K562 (cell line): ENCODE measurements at regions of chr19 and their contacts with region 1.

Region 1: GRCh38 chr19:50705422-50706019 is 14.1 kb downstream of the SHANK1 start:
- DNase-seq: peak; percentile 81 to 84 (median 82)
- ATAC-seq: peak; percentile 92
- H3K4me3 ChIP-seq: no peak overlapping the region
- H3K27ac ChIP-seq: no peak overlapping the region
- H3K4me1 ChIP-seq: peaks cover 0 to 19% of the 10 kb centered on the region in 2 experiments; a peak in 2 of 5 replicates
- H3K27me3 ChIP-seq: peaks cover 20 to 37% of the 10 kb centered on the region in 2 experiments; a peak in 4 of 5 replicates
- CTCF ChIP-seq: peak; percentile 85 to 93 (median 88)
- EP300 ChIP-seq: no peak
- POLR2A ChIP-seq: no peak
- RAD21 ChIP-seq: peak; percentile 85 to 93

Region 2: DNA sequence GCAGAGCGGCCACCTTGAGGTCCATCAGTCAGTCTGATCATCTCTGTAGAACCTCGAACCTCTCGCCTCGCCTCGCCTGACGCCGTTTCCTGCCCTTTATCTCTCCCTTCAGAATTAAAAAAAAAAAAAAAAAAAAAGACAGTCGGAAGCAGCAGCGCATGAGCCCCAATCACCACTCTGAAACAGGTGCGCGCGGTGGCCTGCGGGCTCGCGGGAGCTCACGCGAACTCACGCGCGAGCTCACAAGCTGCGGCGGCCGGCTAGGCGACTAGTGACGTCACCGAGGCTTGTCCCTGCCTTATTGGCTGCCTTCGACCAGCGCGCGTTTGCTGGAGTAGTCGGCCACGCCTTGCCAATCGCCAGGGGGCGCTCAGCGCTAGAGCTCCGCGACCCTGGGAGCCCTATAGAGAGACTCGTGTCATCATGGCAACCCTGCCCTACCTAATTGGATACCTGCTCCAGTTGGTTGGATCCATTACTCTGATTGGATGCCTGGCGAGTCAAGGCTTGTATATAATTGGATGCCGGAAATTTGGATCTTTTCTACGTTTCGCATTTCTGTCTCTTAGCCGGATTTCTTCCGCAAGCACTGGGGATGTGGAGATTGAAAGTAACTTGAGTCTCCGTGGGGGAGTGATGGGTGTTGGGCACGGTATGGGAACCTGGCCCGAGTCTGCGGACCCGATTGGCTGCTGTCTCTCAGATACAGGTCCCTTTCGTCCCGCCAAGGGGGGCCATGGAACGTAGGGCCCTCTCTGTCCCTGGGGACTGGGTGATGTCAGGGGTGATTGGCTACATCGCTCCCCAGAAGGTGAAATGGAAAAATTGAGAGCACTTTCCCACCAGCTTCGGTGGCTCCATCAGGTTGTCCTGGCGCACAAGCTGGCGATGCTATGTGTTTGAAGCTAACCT is 97.4 kb before region 1 on chr19:
- CTCF ChIA-PET with region 1: no interaction called
- POLR2A ChIA-PET with region 1: no interaction called
- in situ Hi-C with region 1: no loop called
- intact Hi-C with region 1: loop called (anchors 5 kb)
- DNase-seq: peak; percentile 91 to 99 (median 93)
- ATAC-seq: peak; percentile 93
- H3K4me3 ChIP-seq: no peak overlapping the region
- H3K27ac ChIP-seq: no peak overlapping the region
- H3K4me1 ChIP-seq: peaks cover 2 to 21% of the 10 kb centered on the region in 2 experiments
- H3K27me3 ChIP-seq: no peaks in the 10 kb centered on the region
- CTCF ChIP-seq: peak; percentile 92 to 98 (median 94)
- EP300 ChIP-seq: no peak
- POLR2A ChIP-seq: no peak; the same call in 1 of the 2 replicates
- RAD21 ChIP-seq: peak; percentile 90 to 92

Region 3: GRCh38 chr19:50690439-50690838 is 15.1 kb before region 1 on chr19:
- CTCF ChIA-PET with region 1: no interaction called
- POLR2A ChIA-PET with region 1: no interaction called
- in situ Hi-C with region 1: no loop called
- intact Hi-C with region 1: no loop called
- DNase-seq: no peak
- ATAC-seq: no peak
- H3K4me3 ChIP-seq: no peak overlapping the region
- H3K27ac ChIP-seq: no peak overlapping the region
- H3K4me1 ChIP-seq: peaks cover 0 to 29% of the 10 kb centered on the region in 2 experiments; a peak in 2 of 5 replicates
- H3K27me3 ChIP-seq: peaks cover 13 to 44% of the 10 kb centered on the region in 2 experiments; a peak in 4 of 5 replicates
- CTCF ChIP-seq: no peak
- EP300 ChIP-seq: no peak
- POLR2A ChIP-seq: no peak
- RAD21 ChIP-seq: no peak

Region 4: GRCh38 chr19:50785329-50785728 is 79.8 kb after region 1 on chr19:
- CTCF ChIA-PET with region 1: interaction called, 61 read pairs
- POLR2A ChIA-PET with region 1: interaction called, 4 read pairs
- in situ Hi-C with region 1: loop called (anchors 5 kb)
- intact Hi-C with region 1: loop called (anchors 1 kb)
- DNase-seq: no peak
- ATAC-seq: no peak
- H3K4me3 ChIP-seq: no peak overlapping the region
- H3K27ac ChIP-seq: no peak overlapping the region
- H3K4me1 ChIP-seq: peaks cover 7 to 15% of the 10 kb centered on the region in 2 experiments; a peak in 4 of 5 replicates
- H3K27me3 ChIP-seq: no peaks in the 10 kb centered on the region
- CTCF ChIP-seq: no peak
- EP300 ChIP-seq: no peak
- POLR2A ChIP-seq: no peak
- RAD21 ChIP-seq: no peak

Region 5: GRCh38 chr19:50915943-50916468 is 210.5 kb after region 1 on chr19:
- CTCF ChIA-PET with region 1: interaction called, 5 read pairs
- POLR2A ChIA-PET with region 1: no interaction called
- in situ Hi-C with region 1: loop called (anchors 5 kb)
- intact Hi-C with region 1: no loop called
- DNase-seq: no peak
- ATAC-seq: no peak
- H3K4me3 ChIP-seq: no peak overlapping the region
- H3K27ac ChIP-seq: no peak overlapping the region
- H3K4me1 ChIP-seq: peaks cover 0 to 7% of the 10 kb centered on the region in 2 experiments; a peak in 2 of 5 replicates
- H3K27me3 ChIP-seq: peaks cover 26 to 53% of the 10 kb centered on the region in 2 experiments
- CTCF ChIP-seq: no peak
- EP300 ChIP-seq: no peak
- POLR2A ChIP-seq: no peak
- RAD21 ChIP-seq: no peak

Region 6: DNA sequence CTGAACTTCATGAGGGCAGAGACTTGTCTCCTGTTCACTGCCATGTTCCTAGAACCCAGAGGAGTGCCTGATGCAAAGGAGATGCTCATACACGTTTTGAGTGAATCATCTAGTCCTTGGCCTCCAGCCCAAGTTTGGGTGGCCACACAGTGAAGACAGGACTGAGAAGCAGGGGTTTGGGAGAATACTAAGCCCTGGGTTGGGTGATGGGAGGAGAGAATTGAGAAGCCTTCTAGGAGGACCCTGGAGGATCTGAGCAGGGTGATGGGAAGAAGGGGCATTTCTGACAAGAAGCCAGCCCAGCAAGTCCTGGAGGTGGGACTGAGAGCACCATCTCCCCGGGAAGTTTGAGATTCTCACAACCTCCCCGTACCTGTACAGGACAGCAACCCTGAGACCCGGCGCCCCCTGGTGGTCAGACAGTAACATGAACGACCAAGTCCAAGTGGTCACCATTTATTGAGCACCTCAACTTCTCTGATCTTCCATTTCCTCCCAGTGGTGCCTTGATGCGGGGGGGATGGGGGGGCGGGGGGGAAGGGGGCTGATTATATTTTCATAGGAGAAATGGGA is 391.7 kb after region 1 on chr19:
- CTCF ChIA-PET with region 1: interaction called, 4 read pairs
- POLR2A ChIA-PET with region 1: no interaction called
- in situ Hi-C with region 1: loop called (anchors 10 kb)
- intact Hi-C with region 1: loop called (anchors 5 kb)
- DNase-seq: peak; percentile 74 to 76 (median 76)
- ATAC-seq: peak; percentile 95
- H3K4me3 ChIP-seq: no peak overlapping the region
- H3K27ac ChIP-seq: no peak overlapping the region
- H3K4me1 ChIP-seq: no peaks in the 10 kb centered on the region; a peak in 1 of 5 replicates
- H3K27me3 ChIP-seq: peaks cover 0 to 2% of the 10 kb centered on the region in 2 experiments; a peak in 2 of 5 replicates
- CTCF ChIP-seq: peak; percentile 75 to 78 (median 78)
- EP300 ChIP-seq: no peak
- POLR2A ChIP-seq: no peak
- RAD21 ChIP-seq: peak in 1 of 2 experiments; percentile 57; a peak in 2 of 4 replicates